Esophagus squamous epithelium (tissue), 5 donors: ENCODE measurements at regions of chr22 and their contacts with region 1.

Region 1: GRCh38 chr22:30763815-30764686 is 69.4 kb downstream of the OSBP2 start:
- DNase-seq: no peak
- H3K4me3 ChIP-seq: no peak overlapping the region
- H3K27ac ChIP-seq: no peak overlapping the region
- H3K4me1 ChIP-seq: peaks cover 0 to 8% (median 0%) of the 10 kb centered on the region in 3 donors
- H3K27me3 ChIP-seq: no peaks in the 10 kb centered on the region
- CTCF ChIP-seq: peak; percentile 33 to 85 (median 67)
- POLR2A ChIP-seq: no peak

Region 2: DNA sequence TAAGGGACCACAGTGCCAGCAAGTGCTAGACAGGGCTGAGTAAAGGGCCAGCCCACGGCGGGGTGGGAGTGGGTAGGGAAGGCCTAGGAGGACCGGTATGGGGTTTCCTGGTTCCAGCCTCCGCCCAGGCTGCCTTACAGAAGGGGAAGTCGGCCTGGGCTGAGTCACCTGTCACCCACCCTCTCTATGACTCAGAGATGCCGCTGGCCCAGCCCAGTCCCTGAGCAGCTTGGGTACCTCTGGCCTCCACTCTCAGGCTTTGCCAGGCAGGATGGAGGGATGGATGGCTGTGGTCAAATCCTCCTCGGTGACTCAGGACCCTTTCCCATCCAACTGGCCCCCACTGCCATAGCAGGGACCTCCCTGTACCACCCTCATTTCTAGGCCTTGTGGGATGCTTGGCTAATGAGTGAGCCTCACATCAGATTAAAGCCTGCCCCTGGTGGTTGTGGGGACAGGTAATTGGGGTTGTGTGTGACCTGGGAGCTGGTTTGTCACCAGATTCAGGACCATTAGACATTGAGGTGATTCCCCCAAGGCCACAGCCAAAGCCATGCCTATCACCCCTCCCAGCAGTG is 114.5 kb before region 1 on chr22:
- intact Hi-C with region 1: no loop called
- DNase-seq: peak; percentile 30
- H3K4me3 ChIP-seq: no peak overlapping the region
- H3K27ac ChIP-seq: peak overlapping the region in 3 of 4 donors; percentile 34 to 71 (median 62)
- H3K4me1 ChIP-seq: peaks cover 8 to 21% (median 11%) of the 10 kb centered on the region in 3 donors
- H3K27me3 ChIP-seq: no peaks in the 10 kb centered on the region
- CTCF ChIP-seq: peak in 1 of 6 experiments; percentile 41
- POLR2A ChIP-seq: no peak

Region 3: GRCh38 chr22:30863081-30863833 is 99.2 kb after region 1 on chr22:
- intact Hi-C with region 1: no loop called
- DNase-seq: no peak
- H3K4me3 ChIP-seq: no peak overlapping the region
- H3K27ac ChIP-seq: no peak overlapping the region
- H3K4me1 ChIP-seq: no peaks in the 10 kb centered on the region
- H3K27me3 ChIP-seq: no peaks in the 10 kb centered on the region
- CTCF ChIP-seq: no peak
- POLR2A ChIP-seq: no peak

Region 4: DNA sequence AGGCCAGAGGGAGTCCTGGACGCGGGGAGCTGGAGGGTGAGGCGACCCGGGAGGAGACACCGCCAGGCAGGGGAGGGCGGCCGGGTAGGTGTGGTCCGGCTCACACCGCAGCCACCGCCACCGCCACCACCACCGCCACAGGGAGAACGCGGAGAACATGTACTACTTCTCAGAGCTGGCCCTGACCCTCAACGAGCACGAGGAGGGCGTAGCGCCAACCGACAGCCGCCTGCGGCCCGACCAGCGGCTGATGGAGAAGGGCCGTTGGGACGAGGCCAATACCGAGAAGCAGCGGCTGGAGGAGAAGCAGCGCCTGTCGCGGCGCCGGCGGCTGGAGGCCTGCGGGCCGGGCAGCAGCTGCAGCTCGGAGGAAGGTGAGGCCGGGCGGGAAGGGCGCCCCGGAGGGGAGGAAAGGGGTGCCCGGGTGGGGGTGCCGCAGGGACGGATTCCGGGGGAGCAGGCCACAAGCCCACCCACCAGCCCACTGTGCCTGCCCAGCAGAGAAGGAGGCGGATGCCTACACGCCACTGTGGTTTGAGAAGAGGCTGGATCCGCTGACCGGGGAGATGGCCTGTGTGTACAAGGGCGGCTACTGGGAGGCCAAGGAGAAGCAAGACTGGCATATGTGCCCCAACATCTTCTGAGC is 141.8 kb after region 1 on chr22:
- intact Hi-C with region 1: loop called (anchors 5 kb)
- DNase-seq: no peak
- H3K4me3 ChIP-seq: no peak overlapping the region
- H3K27ac ChIP-seq: no peak overlapping the region
- H3K4me1 ChIP-seq: no peaks in the 10 kb centered on the region
- H3K27me3 ChIP-seq: no peaks in the 10 kb centered on the region
- CTCF ChIP-seq: no peak
- POLR2A ChIP-seq: no peak

Region 5: DNA sequence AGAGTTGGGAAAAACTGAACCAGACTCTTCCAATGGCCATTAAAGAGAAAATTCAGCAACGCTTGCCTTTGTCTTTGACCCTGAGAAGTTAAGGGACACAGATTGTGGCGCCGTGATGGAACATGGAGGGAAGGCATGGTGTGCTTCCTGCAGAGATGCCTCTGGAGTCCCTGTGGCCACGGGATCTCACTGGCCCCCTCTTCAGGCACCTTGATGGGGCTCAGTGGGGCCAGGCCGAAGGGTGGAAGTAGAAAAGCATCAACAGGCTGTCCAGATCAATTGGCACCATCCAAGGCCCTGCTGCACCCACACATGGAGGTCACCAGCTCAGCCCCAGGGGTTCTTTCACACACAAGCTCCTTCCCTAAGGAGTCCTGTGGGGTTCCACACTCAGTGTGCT is 161.6 kb after region 1 on chr22:
- intact Hi-C with region 1: loop called (anchors 5 kb)
- DNase-seq: no peak
- H3K4me3 ChIP-seq: no peak overlapping the region
- H3K27ac ChIP-seq: no peak overlapping the region
- H3K4me1 ChIP-seq: peaks cover 0 to 18% (median 7%) of the 10 kb centered on the region in 3 donors
- H3K27me3 ChIP-seq: no peaks in the 10 kb centered on the region
- CTCF ChIP-seq: no peak
- POLR2A ChIP-seq: no peak

Region 6: DNA sequence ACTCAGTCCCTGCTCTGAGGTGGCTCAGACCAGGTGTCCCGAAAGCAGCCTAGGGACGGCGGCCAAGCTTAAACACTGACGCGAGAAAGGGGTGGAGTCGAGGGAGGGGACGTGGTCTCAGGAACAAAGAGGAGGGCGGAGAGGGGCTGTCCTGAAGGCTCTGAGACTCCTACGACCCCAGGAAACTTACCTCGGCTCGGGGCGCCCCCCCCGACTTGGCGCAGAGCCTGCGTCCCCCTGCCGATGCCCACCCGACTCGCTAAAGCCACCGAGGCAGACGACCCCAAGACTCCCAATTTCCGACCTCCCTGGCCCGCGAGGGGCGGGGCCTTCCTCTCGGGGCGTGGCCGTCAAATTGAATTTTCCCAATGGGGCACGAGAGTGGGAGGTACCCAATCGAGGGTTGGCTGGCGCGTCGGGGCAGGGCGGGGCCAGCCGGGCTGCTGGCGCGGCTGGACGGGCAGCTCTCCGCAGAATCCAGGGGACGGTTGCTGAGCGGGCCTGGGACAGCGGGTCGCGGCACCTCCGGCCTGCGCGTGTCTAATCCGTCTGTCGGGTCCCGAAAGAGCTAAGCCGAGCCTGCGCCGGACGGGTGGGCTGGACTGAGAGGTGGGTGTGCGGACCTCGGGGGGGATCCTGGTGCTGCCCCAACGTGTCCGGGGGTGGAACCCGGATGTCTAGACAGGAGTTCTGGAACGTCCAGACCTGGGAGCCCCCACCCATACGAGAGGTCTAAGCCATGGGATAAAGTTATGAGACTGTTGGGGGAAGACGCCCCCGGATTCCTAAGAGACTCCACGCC is 317.0 kb after region 1 on chr22 and contains the start of gene SMTN:
- intact Hi-C with region 1: loop called (anchors 10 kb)
- DNase-seq: no peak
- H3K4me3 ChIP-seq: peak within 1 kb of the TSS; percentile 35 to 87 (median 68)
- H3K27ac ChIP-seq: peak within 1 kb of the TSS; percentile 85 to 98 (median 95)
- H3K4me1 ChIP-seq: peaks cover 33 to 71% (median 38%) of the 10 kb centered on the region in 3 donors
- H3K27me3 ChIP-seq: no peaks in the 10 kb centered on the region
- CTCF ChIP-seq: peak in 3 of 6 experiments; percentile 1 to 6 (median 3)
- POLR2A ChIP-seq: peak in 3 of 4 donors; percentile 96 to 98 (median 96)
- total RNA-seq, gene SMTN: 28.2 to 158 (median 45.8) TPM